CD8-positive, alpha-beta T cell (primary cell): ENCODE measurements at regions of chr12 and their contacts with region 1.

Region 1: GRCh38 chr12:4421590-4422031 is 24.0 kb downstream of the FGF6 start:
- DNase-seq: peak in 4 of 9 experiments; percentile 24 to 60 (median 41)
- ATAC-seq: no peak
- H3K4me3 ChIP-seq: no peak overlapping the region
- H3K4me3 Mint-ChIP-seq: no peak overlapping the region
- H3K27ac ChIP-seq: no peak overlapping the region
- H3K27ac Mint-ChIP-seq: no peak overlapping the region
- H3K4me1 ChIP-seq: no peaks in the 10 kb centered on the region
- H3K4me1 Mint-ChIP-seq: no peaks in the 10 kb centered on the region
- H3K27me3 ChIP-seq: no peaks in the 10 kb centered on the region
- H3K27me3 Mint-ChIP-seq: peaks cover 5% of the 10 kb centered on the region
- CTCF ChIP-seq: peak; percentile 89

Region 2: DNA sequence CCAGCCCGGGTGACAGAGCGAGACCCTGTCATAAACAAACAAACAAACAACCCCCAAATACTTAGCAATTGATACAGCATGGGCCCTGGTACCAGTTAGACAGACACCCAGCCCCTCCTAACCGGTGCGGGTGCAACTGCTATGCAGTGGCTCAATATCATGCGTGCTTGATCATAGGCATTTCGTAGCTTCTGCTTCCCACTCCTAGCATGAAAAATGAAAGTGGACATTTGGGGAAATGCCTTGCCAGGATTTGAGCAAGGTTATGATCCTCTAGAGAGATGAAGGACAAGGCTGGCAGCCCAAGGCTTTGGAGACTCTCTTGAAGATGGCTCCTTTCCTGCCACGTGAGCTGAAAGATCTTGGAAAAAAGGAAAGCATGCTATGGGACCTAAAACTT is 10.3 kb after region 1 on chr12:
- CTCF ChIA-PET with region 1: interaction called, 10 read pairs
- POLR2A ChIA-PET with region 1: no interaction called
- intact Hi-C with region 1: no loop called
- DNase-seq: no peak
- ATAC-seq: no peak
- H3K4me3 ChIP-seq: no peak overlapping the region
- H3K4me3 Mint-ChIP-seq: no peak overlapping the region
- H3K27ac ChIP-seq: no peak overlapping the region
- H3K27ac Mint-ChIP-seq: no peak overlapping the region
- H3K4me1 ChIP-seq: no peaks in the 10 kb centered on the region
- H3K4me1 Mint-ChIP-seq: no peaks in the 10 kb centered on the region
- H3K27me3 ChIP-seq: no peaks in the 10 kb centered on the region
- H3K27me3 Mint-ChIP-seq: no peaks in the 10 kb centered on the region
- CTCF ChIP-seq: no peak

Region 3: GRCh38 chr12:4506870-4507269 is 85.3 kb after region 1 on chr12:
- CTCF ChIA-PET with region 1: interaction called, 4 read pairs
- POLR2A ChIA-PET with region 1: no interaction called
- intact Hi-C with region 1: loop called in 1 of 2 experiments (anchors 5 kb)
- DNase-seq: peak in 2 of 9 experiments; percentile 56 to 77
- ATAC-seq: peak; percentile 98
- H3K4me3 ChIP-seq: no peak overlapping the region
- H3K4me3 Mint-ChIP-seq: peak overlapping the region; percentile 38
- H3K27ac ChIP-seq: peak overlapping the region; percentile 0 to 16
- H3K27ac Mint-ChIP-seq: peak overlapping the region; percentile 85
- H3K4me1 ChIP-seq: peaks cover 16% of the 10 kb centered on the region
- H3K4me1 Mint-ChIP-seq: peaks cover 27% of the 10 kb centered on the region
- H3K27me3 ChIP-seq: no peaks in the 10 kb centered on the region
- H3K27me3 Mint-ChIP-seq: no peaks in the 10 kb centered on the region
- CTCF ChIP-seq: no peak

Region 4: GRCh38 chr12:4526923-4527546 is 105.4 kb after region 1 on chr12:
- CTCF ChIA-PET with region 1: interaction called, 73 read pairs
- POLR2A ChIA-PET with region 1: interaction called, 5 read pairs
- intact Hi-C with region 1: loop called (anchors 1 kb)
- DNase-seq: peak in 2 of 9 experiments; percentile 14 to 34
- ATAC-seq: peak; percentile 52
- H3K4me3 ChIP-seq: no peak overlapping the region
- H3K4me3 Mint-ChIP-seq: no peak overlapping the region
- H3K27ac ChIP-seq: no peak overlapping the region
- H3K27ac Mint-ChIP-seq: no peak overlapping the region
- H3K4me1 ChIP-seq: peaks cover 9% of the 10 kb centered on the region
- H3K4me1 Mint-ChIP-seq: peaks cover 5% of the 10 kb centered on the region
- H3K27me3 ChIP-seq: no peaks in the 10 kb centered on the region
- H3K27me3 Mint-ChIP-seq: no peaks in the 10 kb centered on the region
- CTCF ChIP-seq: peak; percentile 93

Region 5: DNA sequence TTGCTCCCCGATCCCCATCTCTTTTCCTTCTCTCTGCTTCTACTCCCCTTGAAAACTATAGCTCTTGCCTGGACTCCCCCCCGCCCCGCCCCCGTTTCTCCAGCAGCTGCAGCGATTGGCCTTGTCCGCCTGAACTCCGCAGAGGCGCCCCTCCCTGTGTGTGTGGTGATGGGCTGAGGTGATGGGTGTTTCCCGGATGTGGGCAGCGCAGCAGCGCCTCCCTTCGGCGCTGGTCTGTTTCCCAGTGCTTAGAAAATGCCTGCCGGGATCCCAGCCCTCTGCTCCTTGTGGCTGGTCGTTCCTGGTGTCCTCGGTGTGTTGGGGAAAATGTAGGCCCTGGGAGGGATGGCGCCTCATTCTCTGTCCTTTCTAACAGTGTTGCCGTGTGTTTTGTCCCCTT is 341.9 kb after region 1 on chr12:
- CTCF ChIA-PET with region 1: interaction called, 3 read pairs
- POLR2A ChIA-PET with region 1: no interaction called
- intact Hi-C with region 1: loop called in 1 of 2 experiments (anchors 5 kb)
- DNase-seq: peak in 3 of 9 experiments; percentile 3 to 24 (median 17)
- ATAC-seq: no peak
- H3K4me3 ChIP-seq: no peak overlapping the region
- H3K4me3 Mint-ChIP-seq: no peak overlapping the region
- H3K27ac ChIP-seq: no peak overlapping the region
- H3K27ac Mint-ChIP-seq: no peak overlapping the region
- H3K4me1 ChIP-seq: no peaks in the 10 kb centered on the region
- H3K4me1 Mint-ChIP-seq: peaks cover 3% of the 10 kb centered on the region
- H3K27me3 ChIP-seq: no peaks in the 10 kb centered on the region
- H3K27me3 Mint-ChIP-seq: peaks cover 4% of the 10 kb centered on the region
- CTCF ChIP-seq: no peak

Region 6: GRCh38 chr12:5083955-5084849 is 662.6 kb after region 1 on chr12:
- CTCF ChIA-PET with region 1: no interaction called
- POLR2A ChIA-PET with region 1: no interaction called
- intact Hi-C with region 1: loop called in 1 of 2 experiments (anchors 10 kb)
- DNase-seq: peak in 2 of 9 experiments; percentile 27 to 41
- ATAC-seq: no peak
- H3K4me3 ChIP-seq: no peak overlapping the region
- H3K4me3 Mint-ChIP-seq: no peak overlapping the region
- H3K27ac ChIP-seq: no peak overlapping the region
- H3K27ac Mint-ChIP-seq: no peak overlapping the region
- H3K4me1 ChIP-seq: no peaks in the 10 kb centered on the region
- H3K4me1 Mint-ChIP-seq: no peaks in the 10 kb centered on the region
- H3K27me3 ChIP-seq: no peaks in the 10 kb centered on the region
- H3K27me3 Mint-ChIP-seq: no peaks in the 10 kb centered on the region
- CTCF ChIP-seq: peak; percentile 51